Ovary (tissue), 10 donors: ENCODE measurements at regions of chr11 and their contacts with region 1.

Region 1: GRCh38 chr11:92123540-92123939 is 101.1 kb upstream of the FAT3 start:
- DNase-seq: no peak
- H3K4me3 ChIP-seq: no peak overlapping the region
- H3K27ac ChIP-seq: no peak overlapping the region
- H3K4me1 ChIP-seq: no peaks in the 10 kb centered on the region
- H3K27me3 ChIP-seq: no peaks in the 10 kb centered on the region
- CTCF ChIP-seq: no peak
- EP300 ChIP-seq: no peak
- POLR2A ChIP-seq: no peak

Region 2: DNA sequence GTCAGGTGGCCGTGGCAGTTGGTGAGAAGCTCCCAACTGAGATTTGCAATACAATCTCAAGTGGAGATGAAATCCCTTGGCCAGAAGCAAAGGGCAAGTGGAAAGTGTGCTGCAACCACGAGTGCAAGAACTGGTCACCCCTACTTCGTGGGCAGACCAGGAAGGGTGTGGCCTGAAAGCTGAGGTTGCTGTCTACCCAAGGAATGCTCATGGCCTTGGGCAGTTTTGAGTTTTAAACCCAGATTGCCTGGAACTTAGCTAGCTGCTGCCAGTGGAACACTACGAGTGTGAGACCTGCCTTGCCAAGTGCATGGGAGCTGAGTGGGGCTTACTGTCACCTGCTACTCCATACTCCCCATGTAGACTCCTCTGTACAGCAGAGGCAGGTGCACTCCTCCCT is 12.3 kb before region 1 on chr11:
- intact Hi-C with region 1: no loop called
- DNase-seq: no peak
- H3K4me3 ChIP-seq: no peak overlapping the region
- H3K27ac ChIP-seq: no peak overlapping the region
- H3K4me1 ChIP-seq: no peaks in the 10 kb centered on the region
- H3K27me3 ChIP-seq: no peaks in the 10 kb centered on the region
- CTCF ChIP-seq: no peak
- EP300 ChIP-seq: no peak
- POLR2A ChIP-seq: no peak

Region 3: GRCh38 chr11:92464822-92465221 is 341.3 kb after region 1 on chr11:
- intact Hi-C with region 1: loop called in 1 of 4 experiments (anchors 5 kb)
- DNase-seq: no peak
- H3K4me3 ChIP-seq: no peak overlapping the region
- H3K27ac ChIP-seq: no peak overlapping the region
- H3K4me1 ChIP-seq: no peaks in the 10 kb centered on the region
- H3K27me3 ChIP-seq: no peaks in the 10 kb centered on the region
- CTCF ChIP-seq: no peak
- EP300 ChIP-seq: no peak
- POLR2A ChIP-seq: no peak